ENCODE measurements at regions of chr3 and their contacts with region 1.

Region 1: GRCh38 chr3:150703299-150704134 is at the start of gene ERICH6:
- DNase-seq: peak; percentile 67 to 96
- H3K4me3 ChIP-seq: peak within 1 kb of the TSS; percentile 70 to 84
- H3K27ac ChIP-seq: peak within 1 kb of the TSS; percentile 83 to 86
- H3K4me1 ChIP-seq: peaks cover 0 to 5% of the 10 kb centered on the region in 2 donors
- H3K27me3 ChIP-seq: no peaks in the 10 kb centered on the region
- CTCF ChIP-seq: peak in 2 of 3 experiments; percentile 7 to 24
- total RNA-seq, gene ERICH6: not detected

Region 2: GRCh38 chr3:150546226-150547044 is 157.1 kb before region 1 on chr3 and contains the starts of genes EIF2A and SERP1:
- intact Hi-C with region 1: loop called (anchors 5 kb)
- DNase-seq: peak; percentile 94 to 99
- H3K4me3 ChIP-seq: peak within 1 kb of the TSS; percentile 89 to 99
- H3K27ac ChIP-seq: peak within 1 kb of the TSS; percentile 99 to 100
- H3K4me1 ChIP-seq: peaks cover 0 to 24% of the 10 kb centered on the region in 2 donors
- H3K27me3 ChIP-seq: no peaks in the 10 kb centered on the region
- CTCF ChIP-seq: no peak
- total RNA-seq, gene EIF2A: 83.2 TPM
- total RNA-seq, gene SERP1: 237 TPM

Region 3: GRCh38 chr3:150603153-150603979 is 100.2 kb before region 1 on chr3 and contains the start of gene SELENOT:
- intact Hi-C with region 1: loop called (anchors 1 kb)
- DNase-seq: peak; percentile 84 to 97
- H3K4me3 ChIP-seq: peak within 1 kb of the TSS; percentile 80 to 83
- H3K27ac ChIP-seq: peak within 1 kb of the TSS; percentile 95 to 96
- H3K4me1 ChIP-seq: peaks cover 8 to 21% of the 10 kb centered on the region in 2 donors
- H3K27me3 ChIP-seq: no peaks in the 10 kb centered on the region
- CTCF ChIP-seq: peak in 1 of 3 experiments; percentile 30
- total RNA-seq, gene SELENOT: 112 TPM

Measured in ascending aorta (tissue), 2 donors.